Activated CD8-positive, alpha-beta T cell treated with anti-CD3 and anti-CD28 coated beads for 36 hours (primary cell): ENCODE measurements at regions of chr10 and their contacts with region 1.

Region 1: DNA sequence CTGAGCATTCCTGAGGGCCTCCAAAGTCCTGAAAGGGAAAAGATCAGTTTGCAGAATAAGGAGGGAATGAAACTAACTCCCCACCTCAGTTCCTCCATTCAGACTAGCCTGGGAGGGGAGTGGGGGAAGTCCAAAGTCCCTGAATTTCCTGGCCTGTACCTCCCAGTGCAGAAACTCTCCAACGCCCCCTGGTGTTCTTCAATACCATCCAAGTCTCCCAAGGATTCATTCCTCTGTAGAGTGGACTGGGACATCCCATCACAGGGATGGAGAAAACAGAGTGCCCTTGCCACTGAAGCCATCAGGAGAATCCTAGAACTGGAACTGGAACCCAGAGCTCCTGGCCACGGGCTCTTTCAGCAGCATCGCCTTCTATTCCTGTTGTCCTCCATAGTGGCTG is 1.6 kb upstream of the COL13A1 start:
- DNase-seq: peak; percentile 24
- ATAC-seq: no peak
- H3K4me3 Mint-ChIP-seq: no peak overlapping the region
- H3K27ac Mint-ChIP-seq: no peak overlapping the region
- H3K4me1 Mint-ChIP-seq: peaks cover 8% of the 10 kb centered on the region
- H3K27me3 Mint-ChIP-seq: peaks cover 50% of the 10 kb centered on the region
- CTCF ChIP-seq: peak; percentile 61

Region 2: DNA sequence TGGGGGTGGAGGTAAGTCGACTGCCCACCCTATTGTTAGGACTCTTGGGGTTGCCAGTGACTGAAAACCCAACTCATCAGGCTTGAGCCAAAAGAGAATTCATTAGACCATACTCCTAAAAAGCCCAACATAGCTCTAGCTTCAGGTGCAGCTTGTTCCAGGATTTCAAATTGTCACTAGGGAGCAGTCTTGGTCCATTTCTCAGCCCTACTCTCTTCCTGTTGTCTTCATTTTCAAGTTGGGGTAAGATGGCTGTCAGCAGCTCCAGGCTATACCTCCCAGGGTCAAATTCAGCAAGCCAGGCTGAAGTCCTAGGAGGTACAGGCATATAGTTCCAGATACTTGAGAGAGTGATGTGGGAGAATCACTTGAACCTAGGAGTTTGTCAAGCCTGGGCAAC is 13.3 kb before region 1 on chr10:
- CTCF ChIA-PET with region 1: interaction called, 19 read pairs
- POLR2A ChIA-PET with region 1: no interaction called
- intact Hi-C with region 1: no loop called
- DNase-seq: no peak
- ATAC-seq: peak; percentile 62
- H3K4me3 Mint-ChIP-seq: no peak overlapping the region
- H3K27ac Mint-ChIP-seq: no peak overlapping the region
- H3K4me1 Mint-ChIP-seq: no peaks in the 10 kb centered on the region
- H3K27me3 Mint-ChIP-seq: peaks cover 6% of the 10 kb centered on the region
- CTCF ChIP-seq: no peak

Region 3: GRCh38 chr10:69861251-69862240 is 61.4 kb after region 1 on chr10:
- CTCF ChIA-PET with region 1: no interaction called
- POLR2A ChIA-PET with region 1: no interaction called
- intact Hi-C with region 1: no loop called
- DNase-seq: peak; percentile 21
- ATAC-seq: peak; percentile 84
- H3K4me3 Mint-ChIP-seq: no peak overlapping the region
- H3K27ac Mint-ChIP-seq: no peak overlapping the region
- H3K4me1 Mint-ChIP-seq: peaks cover 5% of the 10 kb centered on the region
- H3K27me3 Mint-ChIP-seq: no peaks in the 10 kb centered on the region
- CTCF ChIP-seq: peak; percentile 15